T-cell (primary cell): ENCODE measurements at regions of chr15 and their contacts with region 1.

Region 1: DNA sequence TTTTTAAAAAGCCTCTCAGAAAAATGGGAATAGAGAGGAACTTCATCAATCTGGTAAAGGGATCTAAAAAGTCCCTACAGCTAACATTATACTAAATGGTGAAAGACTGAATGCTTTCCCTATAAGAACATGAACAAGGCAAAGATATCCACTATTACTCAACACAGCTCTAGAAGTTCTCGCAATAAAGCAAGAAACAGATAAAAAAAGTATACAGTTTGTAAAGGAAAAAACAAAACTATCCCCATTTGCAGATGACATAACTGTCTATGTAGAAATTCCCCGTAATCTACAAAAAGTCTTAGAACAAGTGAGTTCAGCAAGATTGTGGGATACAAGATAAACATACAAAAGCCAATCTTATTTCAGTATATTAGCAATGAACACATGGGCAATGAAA is 15.4 kb downstream of the EDC3 start:
- DNase-seq: no peak
- ATAC-seq: no peak
- H3K4me3 ChIP-seq: no peak overlapping the region
- H3K4me3 Mint-ChIP-seq: no peak overlapping the region
- H3K27ac ChIP-seq: no peak overlapping the region
- H3K27ac Mint-ChIP-seq: no peak overlapping the region
- H3K4me1 ChIP-seq: no peaks in the 10 kb centered on the region
- H3K4me1 Mint-ChIP-seq: peaks cover 13 to 28% (median 27%) of the 10 kb centered on the region in 3 donors
- H3K27me3 ChIP-seq: no peaks in the 10 kb centered on the region
- H3K27me3 Mint-ChIP-seq: no peaks in the 10 kb centered on the region

Region 2: DNA sequence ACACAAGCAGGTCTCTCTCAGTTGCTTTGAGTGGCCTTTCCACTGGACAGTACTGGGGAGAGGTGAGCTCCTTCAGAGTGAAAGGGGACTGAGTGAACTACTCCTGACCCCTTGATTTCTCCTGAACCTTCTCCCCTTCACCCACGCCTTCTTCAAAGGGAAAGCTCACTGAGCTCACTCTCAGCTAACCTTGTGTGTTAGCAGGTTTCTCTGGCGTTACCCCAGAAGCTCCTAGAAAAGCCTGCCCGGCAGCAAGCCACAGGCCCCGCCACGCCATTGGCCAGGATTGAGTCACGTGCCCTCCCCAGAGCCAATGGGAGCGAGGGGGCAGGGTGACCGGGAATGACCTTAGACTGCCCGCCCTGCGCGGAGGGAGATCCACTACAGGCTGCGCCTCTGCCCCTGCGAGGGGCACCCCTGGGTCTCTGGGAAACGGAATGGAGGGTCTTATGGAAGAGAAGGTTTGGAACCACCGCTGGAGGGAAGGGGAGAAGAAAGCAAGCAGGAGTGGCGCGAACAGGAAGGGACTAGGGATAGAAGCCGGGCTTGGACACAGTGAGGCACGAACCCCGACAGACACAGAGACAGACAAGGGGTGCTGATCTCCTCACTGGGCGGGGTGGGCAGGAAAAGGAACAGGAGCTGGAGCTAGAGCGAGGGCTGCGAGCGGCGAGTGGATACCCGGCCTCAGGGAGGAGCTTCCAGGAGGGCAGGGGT is 82.2 kb before region 1 on chr15:
- CTCF ChIA-PET with region 1: no interaction called
- POLR2A ChIA-PET with region 1: no interaction called
- DNase-seq: peak; percentile 64 to 88 (median 81)
- ATAC-seq: peak; percentile 94 to 98 (median 96)
- H3K4me3 ChIP-seq: peak overlapping the region; percentile 85 to 86
- H3K4me3 Mint-ChIP-seq: peak overlapping the region; percentile 94 to 99 (median 99)
- H3K27ac ChIP-seq: peak overlapping the region; percentile 75
- H3K27ac Mint-ChIP-seq: peak overlapping the region; percentile 99
- H3K4me1 ChIP-seq: peaks cover 2 to 24% of the 10 kb centered on the region in 2 experiments
- H3K4me1 Mint-ChIP-seq: peaks cover 19 to 20% (median 20%) of the 10 kb centered on the region in 3 donors
- H3K27me3 ChIP-seq: no peaks in the 10 kb centered on the region
- H3K27me3 Mint-ChIP-seq: no peaks in the 10 kb centered on the region

Region 3: GRCh38 chr15:74648166-74648842 is 32.2 kb before region 1 on chr15:
- CTCF ChIA-PET with region 1: interaction called in 1 of 2 experiments, 3 read pairs
- POLR2A ChIA-PET with region 1: interaction called in 1 of 2 experiments, 10 read pairs
- DNase-seq: no peak
- ATAC-seq: no peak
- H3K4me3 ChIP-seq: no peak overlapping the region
- H3K4me3 Mint-ChIP-seq: no peak overlapping the region
- H3K27ac ChIP-seq: no peak overlapping the region
- H3K27ac Mint-ChIP-seq: peak overlapping the region; percentile 6 to 22
- H3K4me1 ChIP-seq: no peaks in the 10 kb centered on the region
- H3K4me1 Mint-ChIP-seq: peaks cover 3 to 16% (median 7%) of the 10 kb centered on the region in 3 donors
- H3K27me3 ChIP-seq: no peaks in the 10 kb centered on the region
- H3K27me3 Mint-ChIP-seq: no peaks in the 10 kb centered on the region